Left colon (tissue), 2 donors: ENCODE measurements at regions of chr19 and their contacts with region 1.

Region 1: GRCh38 chr19:408898-409515 is at the start of gene C2CD4C:
- DNase-seq: peak in 1 of 2 donors; percentile 20
- ATAC-seq: peak; percentile 44
- total RNA-seq, gene C2CD4C: 0.59 to 0.85 TPM

Region 2: DNA sequence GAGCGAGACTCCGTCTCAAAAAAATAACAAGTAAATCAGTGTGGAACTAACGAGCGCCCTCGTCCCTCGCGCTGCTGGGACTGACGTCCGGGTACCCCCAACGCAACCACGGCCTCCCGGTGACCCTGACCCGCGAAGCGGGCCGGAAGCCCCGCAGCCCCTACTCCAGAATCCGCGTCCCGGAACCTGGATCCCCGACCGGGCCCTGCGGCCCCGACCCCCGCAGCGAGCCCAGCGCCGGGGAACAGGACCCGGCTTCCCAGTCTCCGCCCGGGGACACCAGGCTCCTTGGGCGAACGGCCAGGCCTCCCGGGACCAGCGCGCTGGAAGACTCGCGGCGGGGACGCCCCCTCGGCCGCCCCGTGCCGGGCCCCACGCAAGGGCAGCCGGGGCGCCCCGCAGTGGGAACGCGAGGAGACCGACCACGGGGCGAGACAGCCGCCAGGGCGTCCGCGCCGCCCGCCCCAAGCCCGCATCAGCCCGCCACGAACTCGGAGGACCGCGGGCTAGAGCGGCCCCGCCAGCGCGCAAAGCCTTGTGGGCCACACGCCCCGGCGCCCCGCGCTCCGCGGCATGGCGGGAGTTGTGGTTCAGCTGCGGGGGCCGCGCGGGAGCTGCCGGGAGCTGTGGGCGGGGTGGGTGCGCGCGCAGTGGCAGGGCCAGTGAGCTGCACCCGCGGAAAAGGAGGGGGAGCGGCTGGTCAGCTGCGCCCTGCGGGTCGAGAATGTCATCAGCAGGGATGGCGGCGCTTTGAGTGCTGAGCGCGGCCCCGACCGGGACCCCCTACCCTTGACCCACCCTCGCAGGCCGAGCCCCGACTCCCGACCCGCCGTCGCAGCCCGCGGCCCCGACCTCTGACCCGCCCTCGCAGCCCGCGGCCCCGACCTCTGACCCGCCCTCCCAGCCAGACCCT is 79.8 kb after region 1 on chr19:
- intact Hi-C with region 1: loop called in 1 of 2 experiments (anchors 10 kb)
- DNase-seq: peak; percentile 95 to 98
- ATAC-seq: peak; percentile 97